ENCODE measurements at regions of chr4 and their contacts with region 1.

Region 1: DNA sequence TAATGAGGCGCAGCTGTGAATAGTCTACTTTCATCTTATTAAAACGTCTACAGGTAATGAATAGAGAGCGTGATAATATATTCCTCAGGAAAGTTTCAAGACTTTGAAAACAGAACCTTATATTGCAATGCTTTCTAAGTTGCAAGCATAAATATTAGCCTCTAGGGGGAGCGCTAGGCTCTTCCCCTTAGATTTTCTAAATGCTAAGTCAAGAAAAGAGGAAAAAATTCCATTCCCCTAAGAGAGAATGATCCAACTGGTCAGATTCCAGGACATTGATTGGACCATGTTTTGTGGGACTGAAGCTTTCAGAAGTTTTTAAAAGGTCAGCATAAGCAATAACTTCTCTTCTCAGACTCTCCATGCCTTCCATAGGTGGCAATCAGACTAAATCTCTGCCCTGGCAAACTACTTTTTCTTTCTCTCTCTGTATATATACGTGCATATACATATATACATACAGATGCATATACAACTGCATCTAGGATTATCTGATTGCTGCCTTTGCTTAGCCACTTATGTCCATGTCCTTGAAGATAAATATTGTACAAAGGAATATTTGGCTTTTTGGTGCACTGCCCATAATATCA is 492.9 kb downstream of the INPP4B start:
- DNase-seq: no peak
- H3K4me3 ChIP-seq: no peak overlapping the region
- H3K27ac ChIP-seq: no peak overlapping the region
- H3K4me1 ChIP-seq: no peaks in the 10 kb centered on the region
- H3K27me3 ChIP-seq: no peaks in the 10 kb centered on the region
- CTCF ChIP-seq: peak; percentile 93

Region 2: DNA sequence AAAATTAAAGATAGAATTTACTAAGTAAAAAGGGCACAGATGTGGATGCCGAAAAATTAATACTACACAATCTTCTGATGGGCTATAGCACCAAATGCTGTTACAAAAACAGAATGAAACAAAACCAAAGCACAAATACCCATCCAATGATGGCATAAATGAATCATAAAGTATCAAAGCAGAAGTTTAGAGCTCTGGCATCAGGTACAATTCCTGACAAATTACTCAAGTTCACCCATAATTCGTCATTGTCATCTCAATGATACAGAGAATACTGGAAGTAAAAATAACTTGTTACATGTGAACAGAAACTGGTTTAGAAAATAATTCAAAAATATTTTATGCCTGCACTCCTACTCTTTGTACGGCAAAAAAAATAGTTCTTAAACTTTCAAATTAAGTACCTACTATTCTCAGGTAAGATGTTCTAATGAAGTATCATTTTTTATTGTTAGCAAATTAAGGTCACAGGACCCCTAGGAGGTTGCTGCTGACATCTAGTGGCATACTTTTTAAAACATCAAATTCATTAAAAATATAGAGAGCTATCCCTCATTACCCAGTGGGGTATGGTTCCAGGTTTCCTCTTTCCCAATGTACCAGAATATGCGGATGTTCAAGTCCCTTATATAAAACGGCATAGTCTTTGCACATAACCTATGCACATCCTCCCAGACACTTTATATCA is 366.8 kb after region 1 on chr4:
- intact Hi-C with region 1: loop called (anchors 5 kb)
- DNase-seq: no peak
- H3K4me3 ChIP-seq: no peak overlapping the region
- H3K27ac ChIP-seq: no peak overlapping the region
- H3K4me1 ChIP-seq: no peaks in the 10 kb centered on the region
- H3K27me3 ChIP-seq: no peaks in the 10 kb centered on the region
- CTCF ChIP-seq: peak; percentile 26

Region 3: GRCh38 chr4:142840516-142841123 is 487.4 kb after region 1 on chr4:
- intact Hi-C with region 1: loop called (anchors 5 kb)
- DNase-seq: no peak
- H3K4me3 ChIP-seq: no peak overlapping the region
- H3K27ac ChIP-seq: no peak overlapping the region
- H3K4me1 ChIP-seq: no peaks in the 10 kb centered on the region
- H3K27me3 ChIP-seq: no peaks in the 10 kb centered on the region
- CTCF ChIP-seq: peak; percentile 56